Activated B cell treated with CpG ODN at 0.5 μM for 24 hours (primary cell): ENCODE measurements at regions of chr10 and their contacts with region 1.

Region 1: GRCh38 chr10:88553116-88553752 is 29.9 kb downstream of the RNLS start:
- DNase-seq: no peak
- ATAC-seq: peak; percentile 99
- H3K4me3 Mint-ChIP-seq: no peak overlapping the region
- H3K27ac Mint-ChIP-seq: no peak overlapping the region
- H3K4me1 Mint-ChIP-seq: no peaks in the 10 kb centered on the region
- H3K27me3 Mint-ChIP-seq: no peaks in the 10 kb centered on the region
- CTCF ChIP-seq: peak; percentile 55

Region 2: DNA sequence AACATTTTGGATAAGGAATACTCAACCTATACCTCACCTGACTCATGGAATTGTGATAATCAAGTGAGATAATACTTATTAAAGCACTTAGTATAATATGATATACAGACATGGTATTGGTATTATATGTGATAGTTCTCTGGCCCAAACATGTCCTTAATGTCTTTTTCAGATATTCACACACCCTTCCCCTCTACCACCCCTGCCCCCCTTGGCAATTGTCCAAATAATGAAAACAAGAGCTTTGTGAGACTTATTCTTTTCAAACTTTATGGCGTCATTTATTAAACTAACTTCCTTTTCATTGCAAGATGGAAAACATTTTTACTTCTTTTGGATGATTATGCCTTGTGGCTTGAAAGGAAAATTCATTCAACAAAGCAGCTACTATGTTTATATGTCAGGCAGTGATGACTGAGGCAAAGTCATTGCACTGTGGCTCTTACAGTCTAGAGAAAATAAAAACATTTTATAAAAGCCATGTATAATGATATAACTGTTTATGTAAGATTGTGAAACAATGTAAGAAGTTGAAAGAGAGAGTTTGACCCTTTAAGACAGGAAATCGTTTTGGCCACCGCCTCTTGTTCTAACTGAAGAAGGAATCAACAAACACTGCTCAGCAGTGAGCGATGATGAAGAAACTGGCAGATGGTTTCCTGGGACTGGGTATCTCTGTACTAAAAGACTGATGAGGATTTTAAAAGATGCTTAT is 1021.2 kb before region 1 on chr10:
- CTCF ChIA-PET with region 1: no interaction called
- POLR2A ChIA-PET with region 1: no interaction called
- intact Hi-C with region 1: loop called (anchors 1 kb)
- DNase-seq: no peak
- ATAC-seq: no peak
- H3K4me3 Mint-ChIP-seq: no peak overlapping the region
- H3K27ac Mint-ChIP-seq: no peak overlapping the region
- H3K4me1 Mint-ChIP-seq: no peaks in the 10 kb centered on the region
- H3K27me3 Mint-ChIP-seq: no peaks in the 10 kb centered on the region
- CTCF ChIP-seq: no peak

Region 3: GRCh38 chr10:87850742-87851205 is 702.5 kb before region 1 on chr10:
- CTCF ChIA-PET with region 1: interaction called, 62 read pairs
- POLR2A ChIA-PET with region 1: no interaction called
- intact Hi-C with region 1: loop called (anchors 1 kb)
- DNase-seq: no peak
- ATAC-seq: peak; percentile 77
- H3K4me3 Mint-ChIP-seq: no peak overlapping the region
- H3K27ac Mint-ChIP-seq: no peak overlapping the region
- H3K4me1 Mint-ChIP-seq: peaks cover 5% of the 10 kb centered on the region
- H3K27me3 Mint-ChIP-seq: no peaks in the 10 kb centered on the region
- CTCF ChIP-seq: no peak

Region 4: GRCh38 chr10:87952612-87953011 is 600.6 kb before region 1 on chr10:
- CTCF ChIA-PET with region 1: no interaction called
- POLR2A ChIA-PET with region 1: no interaction called
- intact Hi-C with region 1: loop called (anchors 10 kb)
- DNase-seq: no peak
- ATAC-seq: no peak
- H3K4me3 Mint-ChIP-seq: no peak overlapping the region
- H3K27ac Mint-ChIP-seq: peak overlapping the region; percentile 6
- H3K4me1 Mint-ChIP-seq: peaks cover 15% of the 10 kb centered on the region
- H3K27me3 Mint-ChIP-seq: no peaks in the 10 kb centered on the region
- CTCF ChIP-seq: no peak

Region 5: GRCh38 chr10:88209837-88210561 is 343.2 kb before region 1 on chr10:
- CTCF ChIA-PET with region 1: no interaction called
- POLR2A ChIA-PET with region 1: no interaction called
- intact Hi-C with region 1: loop called (anchors 10 kb)
- DNase-seq: no peak
- ATAC-seq: no peak
- H3K4me3 Mint-ChIP-seq: no peak overlapping the region
- H3K27ac Mint-ChIP-seq: no peak overlapping the region
- H3K4me1 Mint-ChIP-seq: peaks cover 1% of the 10 kb centered on the region
- H3K27me3 Mint-ChIP-seq: no peaks in the 10 kb centered on the region
- CTCF ChIP-seq: no peak

Region 6: GRCh38 chr10:88293073-88293472 is 260.2 kb before region 1 on chr10:
- CTCF ChIA-PET with region 1: no interaction called
- POLR2A ChIA-PET with region 1: no interaction called
- intact Hi-C with region 1: loop called (anchors 5 kb)
- DNase-seq: no peak
- ATAC-seq: no peak
- H3K4me3 Mint-ChIP-seq: no peak overlapping the region
- H3K27ac Mint-ChIP-seq: no peak overlapping the region
- H3K4me1 Mint-ChIP-seq: peaks cover 40% of the 10 kb centered on the region
- H3K27me3 Mint-ChIP-seq: no peaks in the 10 kb centered on the region
- CTCF ChIP-seq: no peak

Region 7: GRCh38 chr10:88411772-88412349 is 141.4 kb before region 1 on chr10:
- CTCF ChIA-PET with region 1: no interaction called
- POLR2A ChIA-PET with region 1: no interaction called
- intact Hi-C with region 1: loop called (anchors 5 kb)
- DNase-seq: no peak
- ATAC-seq: peak; percentile 56
- H3K4me3 Mint-ChIP-seq: no peak overlapping the region
- H3K27ac Mint-ChIP-seq: no peak overlapping the region
- H3K4me1 Mint-ChIP-seq: peaks cover 11% of the 10 kb centered on the region
- H3K27me3 Mint-ChIP-seq: no peaks in the 10 kb centered on the region
- CTCF ChIP-seq: no peak

Region 8: GRCh38 chr10:88616251-88616977 is 63.2 kb after region 1 on chr10:
- CTCF ChIA-PET with region 1: no interaction called
- POLR2A ChIA-PET with region 1: no interaction called
- intact Hi-C with region 1: no loop called
- DNase-seq: no peak
- ATAC-seq: no peak
- H3K4me3 Mint-ChIP-seq: no peak overlapping the region
- H3K27ac Mint-ChIP-seq: no peak overlapping the region
- H3K4me1 Mint-ChIP-seq: no peaks in the 10 kb centered on the region
- H3K27me3 Mint-ChIP-seq: no peaks in the 10 kb centered on the region
- CTCF ChIP-seq: no peak

Region 9: DNA sequence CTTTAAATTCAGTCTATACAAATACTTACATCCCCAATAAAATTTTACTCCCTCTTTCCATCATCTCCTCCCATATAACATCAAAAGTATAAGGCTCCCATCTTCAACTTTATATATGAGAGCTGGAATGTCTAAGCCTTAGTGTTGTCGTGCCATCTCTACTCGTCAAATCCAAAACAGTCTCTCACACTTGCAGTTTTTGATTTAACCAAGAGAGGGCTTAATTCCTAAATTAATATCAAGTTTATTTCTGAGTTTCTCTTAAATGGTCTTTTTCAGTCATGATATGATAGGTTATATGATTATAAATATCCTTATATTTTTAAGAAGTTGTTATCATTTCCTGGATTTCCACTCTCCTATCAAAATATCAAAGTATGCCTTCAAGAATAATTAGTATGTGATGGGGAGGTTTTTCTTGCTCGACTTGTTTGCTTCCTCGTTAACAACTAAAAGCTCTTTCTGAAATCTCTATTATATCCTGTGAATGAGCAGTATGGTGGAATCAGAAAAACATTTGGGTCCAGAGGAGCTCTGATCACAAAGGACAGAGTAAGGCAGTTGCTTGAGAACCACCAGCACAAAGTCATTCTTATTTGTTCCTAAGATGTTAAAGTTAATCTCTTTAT is 140.3 kb after region 1 on chr10:
- CTCF ChIA-PET with region 1: no interaction called
- POLR2A ChIA-PET with region 1: no interaction called
- intact Hi-C with region 1: no loop called
- DNase-seq: no peak
- ATAC-seq: no peak
- H3K4me3 Mint-ChIP-seq: no peak overlapping the region
- H3K27ac Mint-ChIP-seq: no peak overlapping the region
- H3K4me1 Mint-ChIP-seq: no peaks in the 10 kb centered on the region
- H3K27me3 Mint-ChIP-seq: peaks cover 14% of the 10 kb centered on the region
- CTCF ChIP-seq: no peak